ENCODE measurements at regions of chr3 and their contacts with region 1.

Region 1: GRCh38 chr3:153161138-153161713 is 800 bp upstream of the RAP2B start:
- DNase-seq: peak; percentile 93 to 98
- ATAC-seq: peak; percentile 96
- H3K4me3 ChIP-seq: peak overlapping the region; percentile 52 to 74
- H3K27ac ChIP-seq: peak overlapping the region; percentile 47 to 77
- H3K4me1 ChIP-seq: peaks cover 0 to under 1% of the 10 kb centered on the region in 2 donors
- H3K27me3 ChIP-seq: peaks cover 0 to 2% of the 10 kb centered on the region in 2 donors

Region 2: GRCh38 chr3:152760024-152760563 is 401.1 kb before region 1 on chr3:
- intact Hi-C with region 1: no loop called
- DNase-seq: no peak
- ATAC-seq: no peak
- H3K4me3 ChIP-seq: no peak overlapping the region
- H3K27ac ChIP-seq: no peak overlapping the region
- H3K4me1 ChIP-seq: no peaks in the 10 kb centered on the region
- H3K27me3 ChIP-seq: no peaks in the 10 kb centered on the region

Region 3: GRCh38 chr3:153032891-153033290 is 128.3 kb before region 1 on chr3:
- intact Hi-C with region 1: no loop called
- DNase-seq: no peak
- ATAC-seq: no peak
- H3K4me3 ChIP-seq: no peak overlapping the region
- H3K27ac ChIP-seq: no peak overlapping the region
- H3K4me1 ChIP-seq: no peaks in the 10 kb centered on the region
- H3K27me3 ChIP-seq: no peaks in the 10 kb centered on the region

Region 4: GRCh38 chr3:153043729-153044328 is 117.4 kb before region 1 on chr3:
- intact Hi-C with region 1: loop called (anchors 2 to 10 kb)
- DNase-seq: no peak
- ATAC-seq: peak; percentile 56
- H3K4me3 ChIP-seq: no peak overlapping the region
- H3K27ac ChIP-seq: no peak overlapping the region
- H3K4me1 ChIP-seq: no peaks in the 10 kb centered on the region
- H3K27me3 ChIP-seq: no peaks in the 10 kb centered on the region

Region 5: GRCh38 chr3:153052096-153052460 is 109.1 kb before region 1 on chr3:
- intact Hi-C with region 1: loop called (anchors 2 to 10 kb)
- DNase-seq: peak; percentile 83 to 84
- ATAC-seq: peak; percentile 90
- H3K4me3 ChIP-seq: no peak overlapping the region
- H3K27ac ChIP-seq: peak overlapping the region in 1 of 2 donors; percentile 77
- H3K4me1 ChIP-seq: no peaks in the 10 kb centered on the region
- H3K27me3 ChIP-seq: no peaks in the 10 kb centered on the region

Region 6: DNA sequence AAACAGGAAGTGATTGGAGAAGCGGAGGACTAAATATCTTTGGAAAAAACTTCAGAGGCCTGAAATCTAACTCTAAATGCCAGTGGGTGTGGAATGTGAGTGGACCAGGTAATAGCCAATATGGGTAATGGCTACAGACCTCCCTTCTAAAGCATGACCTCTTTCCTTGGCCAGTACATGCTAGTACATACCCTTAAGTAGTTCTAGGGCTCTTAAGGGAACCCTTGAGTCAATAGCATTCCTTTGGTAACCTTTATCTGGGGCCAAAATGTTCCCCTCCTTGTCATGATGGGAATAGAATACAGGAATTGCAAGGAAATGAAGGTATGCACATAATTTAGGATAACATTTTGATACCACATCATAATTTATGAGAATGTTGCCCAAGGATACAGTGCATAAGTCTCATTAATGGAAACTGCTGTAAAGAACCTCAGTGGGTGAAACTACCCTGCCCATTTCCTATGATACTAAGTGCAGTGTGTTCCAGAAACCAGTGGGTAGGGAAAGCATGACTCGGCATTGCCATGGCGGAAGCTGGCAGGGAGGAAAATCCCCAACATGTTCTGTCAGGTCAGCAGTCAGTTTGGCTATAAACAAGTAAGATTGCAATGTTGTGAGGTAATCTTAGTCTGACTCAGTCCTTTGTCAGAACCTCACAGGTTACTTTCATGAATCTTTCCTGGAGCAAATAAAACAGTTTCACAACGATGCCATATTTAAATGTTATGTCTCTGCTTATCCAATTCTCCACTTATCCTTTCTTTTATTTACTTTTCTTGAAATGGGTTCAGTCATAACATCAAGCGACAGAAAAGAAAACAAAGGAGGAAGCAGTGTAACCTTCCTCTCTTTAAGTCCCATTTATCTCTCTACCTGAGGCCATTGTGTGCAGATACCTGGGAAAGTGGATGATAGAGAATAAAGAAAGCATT is 22.7 kb before region 1 on chr3:
- intact Hi-C with region 1: loop called in 1 of 2 experiments (anchors 1 kb)
- DNase-seq: peak; percentile 81 to 88
- ATAC-seq: peak; percentile 81
- H3K4me3 ChIP-seq: no peak overlapping the region
- H3K27ac ChIP-seq: peak overlapping the region in 1 of 2 donors; percentile 12
- H3K4me1 ChIP-seq: no peaks in the 10 kb centered on the region
- H3K27me3 ChIP-seq: no peaks in the 10 kb centered on the region

Region 7: DNA sequence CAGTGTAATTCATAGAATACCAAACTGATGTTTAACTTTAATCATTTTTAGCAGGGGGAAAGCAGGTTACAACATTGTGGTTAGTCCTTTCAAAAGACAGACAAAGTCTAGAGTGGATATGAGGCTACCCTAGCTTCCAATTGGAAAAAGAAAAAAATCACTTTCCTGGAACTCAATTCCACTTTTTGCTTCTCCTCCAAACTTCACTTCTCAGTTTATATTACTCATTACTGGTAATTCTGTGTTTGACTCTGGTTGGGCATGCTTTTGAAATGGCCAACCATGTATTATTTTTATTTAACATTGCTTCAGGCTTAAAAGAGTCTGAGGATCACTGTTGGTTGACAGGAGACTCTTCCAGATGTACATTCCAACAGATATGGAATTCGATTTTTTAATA is 85.6 kb after region 1 on chr3:
- intact Hi-C with region 1: loop called in 1 of 2 experiments (anchors 2 kb)
- DNase-seq: no peak
- ATAC-seq: peak; percentile 63
- H3K4me3 ChIP-seq: no peak overlapping the region
- H3K27ac ChIP-seq: no peak overlapping the region
- H3K4me1 ChIP-seq: no peaks in the 10 kb centered on the region
- H3K27me3 ChIP-seq: no peaks in the 10 kb centered on the region

Region 8: DNA sequence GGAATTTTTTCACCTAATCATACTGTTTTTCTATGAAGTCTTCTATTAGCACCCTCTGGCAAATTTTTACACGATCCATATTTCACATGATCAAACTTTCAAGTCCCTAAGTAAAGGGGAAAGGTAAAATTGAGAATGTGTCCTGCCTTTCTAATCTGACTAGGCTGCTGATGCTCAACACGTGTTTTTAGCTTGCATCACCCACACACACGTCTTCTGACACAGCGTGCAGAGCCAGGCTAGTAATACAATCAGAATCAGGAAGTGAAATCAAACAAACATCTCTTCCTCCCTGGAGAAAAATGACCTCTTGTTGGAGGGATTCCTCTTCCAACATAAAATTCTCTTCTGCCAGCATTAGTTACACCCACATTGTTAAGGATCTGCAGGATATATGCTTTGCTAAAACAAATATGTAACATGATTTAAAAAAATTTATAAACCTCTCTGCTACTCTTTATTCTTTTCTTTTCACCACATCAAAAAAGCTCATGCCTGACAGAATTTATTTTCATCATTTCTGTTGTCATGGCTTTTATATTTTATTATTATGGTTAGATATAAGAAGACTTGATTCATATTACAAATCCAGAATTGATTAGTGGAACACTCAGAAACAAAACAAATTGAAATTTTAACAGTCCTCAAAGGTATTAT is 123.2 kb after region 1 on chr3:
- intact Hi-C with region 1: loop called in 1 of 2 experiments (anchors 5 kb)
- DNase-seq: peak in 1 of 2 donors; percentile 84
- ATAC-seq: peak; percentile 88
- H3K4me3 ChIP-seq: no peak overlapping the region
- H3K27ac ChIP-seq: no peak overlapping the region
- H3K4me1 ChIP-seq: no peaks in the 10 kb centered on the region
- H3K27me3 ChIP-seq: no peaks in the 10 kb centered on the region

Region 9: GRCh38 chr3:153439777-153440176 is 278.6 kb after region 1 on chr3:
- intact Hi-C with region 1: loop called in 1 of 2 experiments (anchors 10 kb)
- DNase-seq: no peak
- ATAC-seq: no peak
- H3K4me3 ChIP-seq: no peak overlapping the region
- H3K27ac ChIP-seq: no peak overlapping the region
- H3K4me1 ChIP-seq: peaks cover 4 to 6% of the 10 kb centered on the region in 2 donors
- H3K27me3 ChIP-seq: no peaks in the 10 kb centered on the region